T-cell (primary cell): ENCODE measurements at regions of chr5 and their contacts with region 1.

Region 1: GRCh38 chr5:94745786-94746730 is 127.6 kb downstream of the SLF1 start:
- DNase-seq: no peak
- ATAC-seq: no peak
- H3K4me3 ChIP-seq: no peak overlapping the region
- H3K4me3 Mint-ChIP-seq: no peak overlapping the region
- H3K27ac ChIP-seq: no peak overlapping the region
- H3K27ac Mint-ChIP-seq: no peak overlapping the region
- H3K4me1 ChIP-seq: no peaks in the 10 kb centered on the region
- H3K4me1 Mint-ChIP-seq: peaks cover 0 to 3% (median 0%) of the 10 kb centered on the region in 3 donors
- H3K27me3 ChIP-seq: peaks cover 0 to 11% of the 10 kb centered on the region in 2 experiments
- H3K27me3 Mint-ChIP-seq: peaks cover 0 to 5% of the 10 kb centered on the region in 2 donors

Region 2: DNA sequence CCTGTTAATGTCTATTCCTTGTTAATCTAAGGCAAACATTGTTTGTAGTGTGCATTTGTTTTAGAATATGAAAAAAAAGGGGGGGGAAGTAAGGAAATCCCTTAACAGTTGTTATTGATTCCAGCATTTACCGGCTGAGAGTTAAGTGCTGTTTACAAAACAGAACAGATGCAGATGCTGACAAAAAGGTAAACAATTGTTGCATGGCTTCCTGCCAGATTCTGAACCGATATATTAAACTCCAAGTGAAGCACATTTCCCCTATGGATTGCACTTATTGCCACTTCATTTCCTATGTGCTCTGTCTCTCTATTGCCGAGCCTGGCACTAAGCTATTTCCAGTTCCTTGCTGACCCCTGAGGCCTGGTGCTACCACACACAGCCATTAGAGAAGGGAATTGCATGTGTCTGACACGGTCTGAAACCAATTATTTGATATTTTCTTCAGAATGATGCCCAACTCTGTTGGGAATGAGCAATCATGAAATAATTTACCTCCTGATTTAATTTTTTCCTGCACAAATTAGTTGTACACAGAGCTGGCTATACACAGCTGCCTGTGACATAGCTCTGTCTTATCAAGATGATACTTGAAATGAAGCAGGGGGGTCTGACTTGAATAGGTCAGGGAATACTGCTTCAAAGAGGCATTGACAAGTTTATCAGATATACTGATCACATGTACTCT is 237.5 kb before region 1 on chr5:
- CTCF ChIA-PET with region 1: interaction called in 1 of 2 experiments, 11 read pairs
- POLR2A ChIA-PET with region 1: no interaction called
- DNase-seq: no peak
- ATAC-seq: no peak
- H3K4me3 ChIP-seq: no peak overlapping the region
- H3K4me3 Mint-ChIP-seq: no peak overlapping the region
- H3K27ac ChIP-seq: no peak overlapping the region
- H3K27ac Mint-ChIP-seq: no peak overlapping the region
- H3K4me1 ChIP-seq: no peaks in the 10 kb centered on the region
- H3K4me1 Mint-ChIP-seq: no peaks in the 10 kb centered on the region
- H3K27me3 ChIP-seq: no peaks in the 10 kb centered on the region
- H3K27me3 Mint-ChIP-seq: no peaks in the 10 kb centered on the region

Region 3: DNA sequence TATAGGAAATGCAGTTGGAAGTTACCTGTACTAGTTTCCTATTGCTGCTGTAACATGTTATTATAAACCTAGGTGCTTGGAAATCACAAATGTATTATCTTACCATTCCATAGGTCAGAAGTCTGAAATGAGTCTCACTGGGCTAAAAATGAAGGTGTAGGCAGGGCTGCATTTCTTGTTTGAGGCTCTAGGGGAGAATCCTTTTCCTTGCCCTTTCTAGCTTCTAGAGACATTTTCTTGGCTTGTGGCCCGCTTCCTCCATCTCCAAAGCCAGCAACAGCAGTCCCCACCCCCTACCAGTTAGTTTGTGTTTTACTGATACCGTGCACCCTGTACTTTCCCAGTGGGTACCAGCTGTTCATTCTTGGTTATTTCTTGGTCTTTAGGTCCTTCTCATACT is 25.7 kb after region 1 on chr5:
- CTCF ChIA-PET with region 1: no interaction called
- POLR2A ChIA-PET with region 1: no interaction called
- DNase-seq: no peak
- ATAC-seq: no peak
- H3K4me3 ChIP-seq: no peak overlapping the region
- H3K4me3 Mint-ChIP-seq: no peak overlapping the region
- H3K27ac ChIP-seq: no peak overlapping the region
- H3K27ac Mint-ChIP-seq: no peak overlapping the region
- H3K4me1 ChIP-seq: no peaks in the 10 kb centered on the region
- H3K4me1 Mint-ChIP-seq: no peaks in the 10 kb centered on the region
- H3K27me3 ChIP-seq: no peaks in the 10 kb centered on the region
- H3K27me3 Mint-ChIP-seq: peaks cover 3 to 4% of the 10 kb centered on the region in 2 donors